ENCODE measurements at regions of chr19 and their contacts with region 1.

Region 1: DNA sequence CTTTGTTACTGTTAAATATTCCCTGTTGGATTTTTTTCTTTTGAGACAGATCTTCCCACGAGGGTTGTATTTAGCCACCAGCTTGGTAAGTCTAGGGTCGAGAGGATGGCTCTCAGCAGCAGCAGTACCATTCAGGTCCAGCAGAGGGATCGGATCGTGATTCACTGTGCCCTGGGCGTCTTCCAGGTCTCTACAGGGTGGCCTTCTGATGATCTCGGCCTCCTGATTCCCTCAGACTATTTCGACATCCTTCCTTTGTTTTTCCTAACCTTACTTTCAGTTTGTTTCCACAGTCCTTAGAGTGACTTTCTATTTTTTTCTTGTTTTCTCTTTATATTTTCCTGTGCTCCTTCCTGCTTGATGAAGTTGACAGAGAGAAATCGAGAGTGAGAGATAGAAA is 1436.9 kb downstream of the UQCRFS1 start:
- DNase-seq: no peak
- ATAC-seq: 0 out of 3 replicates have a peak, but pooled peaks have one; percentile 38
- H3K4me3 ChIP-seq: no peak overlapping the region
- H3K27ac ChIP-seq: no peak overlapping the region
- H3K4me1 ChIP-seq: no peaks in the 10 kb centered on the region
- H3K27me3 ChIP-seq: no peaks in the 10 kb centered on the region; a peak in 1 of 5 replicates
- CTCF ChIP-seq: no peak
- EP300 ChIP-seq: no peak
- POLR2A ChIP-seq: no peak
- RAD21 ChIP-seq: no peak

Region 2: GRCh38 chr19:27672309-27673047 is 103.5 kb before region 1 on chr19:
- CTCF ChIA-PET with region 1: no interaction called
- POLR2A ChIA-PET with region 1: no interaction called
- in situ Hi-C with region 1: no loop called
- intact Hi-C with region 1: no loop called
- DNase-seq: no peak
- ATAC-seq: no peak
- H3K4me3 ChIP-seq: no peak overlapping the region
- H3K27ac ChIP-seq: no peak overlapping the region
- H3K4me1 ChIP-seq: no peaks in the 10 kb centered on the region
- H3K27me3 ChIP-seq: no peaks in the 10 kb centered on the region
- CTCF ChIP-seq: no peak
- EP300 ChIP-seq: no peak
- POLR2A ChIP-seq: no peak
- RAD21 ChIP-seq: no peak

Region 3: DNA sequence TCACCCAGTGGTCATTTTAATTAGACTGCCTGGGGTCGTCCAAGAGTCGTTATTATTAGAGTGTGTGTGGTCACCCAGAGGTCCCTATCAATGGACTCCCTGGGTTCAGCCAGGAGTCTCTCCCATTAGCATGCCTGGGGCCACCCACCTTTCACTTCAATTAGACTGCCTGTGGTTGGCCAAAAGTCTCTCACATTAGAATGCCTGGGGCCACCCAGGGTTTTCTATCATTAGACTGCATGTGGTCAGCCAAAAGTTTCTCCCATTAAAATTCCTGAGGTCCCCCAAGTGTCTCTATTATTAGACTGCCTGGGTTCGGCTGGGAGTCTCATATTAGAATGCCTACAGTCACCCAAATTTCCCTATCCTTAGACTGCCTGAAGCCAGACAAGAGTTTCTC is 35.6 kb before region 1 on chr19:
- CTCF ChIA-PET with region 1: no interaction called
- POLR2A ChIA-PET with region 1: no interaction called
- in situ Hi-C with region 1: no loop called
- intact Hi-C with region 1: no loop called
- DNase-seq: no peak
- ATAC-seq: no peak
- H3K4me3 ChIP-seq: no peak overlapping the region
- H3K27ac ChIP-seq: no peak overlapping the region
- H3K4me1 ChIP-seq: no peaks in the 10 kb centered on the region
- H3K27me3 ChIP-seq: no peaks in the 10 kb centered on the region
- CTCF ChIP-seq: no peak
- EP300 ChIP-seq: no peak
- POLR2A ChIP-seq: no peak
- RAD21 ChIP-seq: no peak

Region 4: GRCh38 chr19:27793644-27794493 is 17.8 kb after region 1 on chr19:
- CTCF ChIA-PET with region 1: no interaction called
- POLR2A ChIA-PET with region 1: interaction called, 5 read pairs
- in situ Hi-C with region 1: no loop called
- intact Hi-C with region 1: loop called (anchors 2 kb)
- DNase-seq: peak; percentile 92
- ATAC-seq: peak; percentile 97
- H3K4me3 ChIP-seq: peak overlapping the region; percentile 70 to 92 (median 84)
- H3K27ac ChIP-seq: peak overlapping the region; percentile 92
- H3K4me1 ChIP-seq: peaks cover 28% of the 10 kb centered on the region
- H3K27me3 ChIP-seq: no peaks in the 10 kb centered on the region; a peak in 1 of 5 replicates
- CTCF ChIP-seq: no peak; the same call in 1 of the 2 replicates
- EP300 ChIP-seq: no peak
- POLR2A ChIP-seq: peak; percentile 86 to 87
- RAD21 ChIP-seq: 0 out of 2 replicates have a peak, but pooled peaks have one; percentile 24